CD8-positive, alpha-beta memory T cell (primary cell): ENCODE measurements at regions of chr17 and their contacts with region 1.

Region 1: GRCh38 chr17:30336369-30337171 is 2.7 kb upstream of the TMIGD1 start:
- DNase-seq: peak; percentile 45 to 74 (median 67)
- H3K4me3 ChIP-seq: no peak overlapping the region
- H3K4me3 Mint-ChIP-seq: peak overlapping the region in 1 of 7 donors; percentile 31
- H3K27ac ChIP-seq: no peak overlapping the region
- H3K27ac Mint-ChIP-seq: peak overlapping the region in 5 of 8 donors; percentile 11 to 79 (median 61)
- H3K4me1 ChIP-seq: peaks cover 12% of the 10 kb centered on the region
- H3K4me1 Mint-ChIP-seq: peaks cover 32 to 46% (median 42%) of the 10 kb centered on the region in 3 donors
- H3K27me3 ChIP-seq: no peaks in the 10 kb centered on the region
- H3K27me3 Mint-ChIP-seq: no peaks in the 10 kb centered on the region

Region 2: GRCh38 chr17:30104575-30105339 is 231.8 kb before region 1 on chr17:
- CTCF ChIA-PET with region 1: interaction called, 71 read pairs
- POLR2A ChIA-PET with region 1: no interaction called
- DNase-seq: peak; percentile 51 to 76 (median 55)
- H3K4me3 ChIP-seq: peak overlapping the region; percentile 66
- H3K4me3 Mint-ChIP-seq: peak overlapping the region; percentile 60 to 91 (median 87)
- H3K27ac ChIP-seq: no peak overlapping the region
- H3K27ac Mint-ChIP-seq: peak overlapping the region in 6 of 8 donors; percentile 5 to 88 (median 60)
- H3K4me1 ChIP-seq: peaks cover 10% of the 10 kb centered on the region
- H3K4me1 Mint-ChIP-seq: peaks cover 6 to 10% (median 6%) of the 10 kb centered on the region in 3 donors
- H3K27me3 ChIP-seq: no peaks in the 10 kb centered on the region
- H3K27me3 Mint-ChIP-seq: peaks cover 2 to 5% of the 10 kb centered on the region in 2 donors

Region 3: DNA sequence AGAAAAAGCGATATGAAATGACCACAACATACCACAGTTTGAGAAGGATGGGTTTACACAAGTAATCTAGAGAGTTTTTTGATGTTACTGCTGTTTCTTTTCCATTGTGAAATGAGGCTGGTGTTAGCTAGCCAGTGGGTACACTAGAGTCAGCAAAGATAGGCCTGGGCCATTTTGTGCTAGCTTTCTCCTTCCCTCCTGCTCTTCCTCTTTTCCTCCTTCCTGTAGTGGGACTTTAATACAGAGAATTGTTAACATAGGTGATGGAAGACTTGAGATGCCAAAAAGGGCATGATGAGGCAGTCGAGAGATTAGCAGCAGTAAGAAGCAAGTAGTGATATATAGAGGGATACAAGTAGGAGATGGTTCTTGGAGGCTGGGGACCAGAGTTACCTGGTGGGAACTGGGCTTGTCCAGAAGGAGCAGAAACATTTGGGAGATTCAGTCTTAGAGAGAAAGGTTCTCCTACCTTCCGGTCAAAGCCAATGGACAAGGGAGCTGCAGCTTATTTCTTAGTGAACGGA is 212.2 kb before region 1 on chr17:
- CTCF ChIA-PET with region 1: interaction called, 31 read pairs
- POLR2A ChIA-PET with region 1: interaction called, 5 read pairs
- DNase-seq: no peak
- H3K4me3 ChIP-seq: no peak overlapping the region
- H3K4me3 Mint-ChIP-seq: no peak overlapping the region
- H3K27ac ChIP-seq: no peak overlapping the region
- H3K27ac Mint-ChIP-seq: peak overlapping the region in 5 of 8 donors; percentile 0 to 86 (median 32)
- H3K4me1 ChIP-seq: peaks cover 7% of the 10 kb centered on the region
- H3K4me1 Mint-ChIP-seq: peaks cover 37 to 59% (median 56%) of the 10 kb centered on the region in 3 donors
- H3K27me3 ChIP-seq: no peaks in the 10 kb centered on the region
- H3K27me3 Mint-ChIP-seq: peaks cover 0 to 1% of the 10 kb centered on the region in 2 donors

Region 4: DNA sequence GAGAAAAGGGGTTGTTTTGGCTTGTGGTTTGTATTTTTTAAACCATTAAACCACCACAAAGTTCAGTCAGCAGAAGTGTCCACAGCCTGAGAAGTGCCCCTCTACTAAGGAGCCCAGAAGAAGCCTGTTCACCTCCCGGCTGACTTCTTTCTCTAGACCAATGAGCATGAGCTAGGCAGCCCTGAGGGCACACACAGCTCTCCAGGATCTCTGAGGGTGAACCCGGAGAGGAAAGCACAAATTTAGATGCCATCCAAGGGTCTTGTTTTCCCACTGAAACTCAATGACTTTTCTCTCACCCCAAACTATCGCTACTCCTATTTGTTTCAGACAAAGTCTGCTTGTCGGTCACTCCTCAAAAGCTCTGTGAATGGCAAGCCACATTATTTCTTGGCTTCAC is 78.1 kb before region 1 on chr17:
- CTCF ChIA-PET with region 1: no interaction called
- POLR2A ChIA-PET with region 1: no interaction called
- DNase-seq: no peak
- H3K4me3 ChIP-seq: no peak overlapping the region
- H3K4me3 Mint-ChIP-seq: no peak overlapping the region
- H3K27ac ChIP-seq: no peak overlapping the region
- H3K27ac Mint-ChIP-seq: peak overlapping the region in 5 of 8 donors; percentile 6 to 38 (median 27)
- H3K4me1 ChIP-seq: no peaks in the 10 kb centered on the region
- H3K4me1 Mint-ChIP-seq: peaks cover 6 to 24% (median 7%) of the 10 kb centered on the region in 3 donors
- H3K27me3 ChIP-seq: no peaks in the 10 kb centered on the region
- H3K27me3 Mint-ChIP-seq: no peaks in the 10 kb centered on the region

Region 5: DNA sequence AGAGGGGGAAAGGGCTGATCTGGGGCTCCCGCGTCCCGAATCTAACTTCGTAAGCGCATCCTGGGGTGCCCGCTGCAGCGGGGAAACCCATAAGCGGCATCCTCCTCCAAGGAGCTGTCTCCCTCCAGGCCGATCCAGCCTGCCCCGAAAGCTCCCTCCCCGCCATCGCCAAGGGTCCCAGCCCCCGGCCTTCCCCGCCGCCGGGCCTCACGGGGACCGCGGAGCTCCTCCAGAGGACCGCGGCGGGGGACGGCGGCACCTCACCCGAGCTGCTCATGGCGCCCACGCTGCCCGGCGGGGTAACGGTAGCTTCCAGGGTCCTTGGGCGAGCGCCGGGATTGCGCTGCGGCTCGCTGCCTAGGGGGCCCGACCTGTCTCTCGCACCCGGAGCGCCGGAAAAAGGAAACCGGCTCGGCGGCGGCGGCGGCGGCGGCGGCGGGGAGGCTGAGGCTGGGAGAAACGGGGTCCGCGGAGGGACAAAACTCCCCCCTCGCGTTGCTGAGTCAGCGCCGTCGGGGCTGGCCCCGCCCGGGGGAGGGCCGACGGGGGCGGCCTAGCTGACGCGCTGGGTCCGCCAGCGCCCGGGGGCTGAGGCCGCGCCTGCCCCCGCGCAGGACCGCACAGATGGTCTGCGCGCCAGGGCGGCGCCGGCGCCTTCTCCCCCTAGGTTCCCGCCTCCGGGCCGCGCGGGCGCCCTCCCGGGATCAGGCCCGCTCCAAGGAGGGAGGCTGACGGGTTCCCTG is 44.9 kb before region 1 on chr17 and contains the start of gene BLMH:
- CTCF ChIA-PET with region 1: interaction called, 36 read pairs
- POLR2A ChIA-PET with region 1: interaction called, 5 read pairs
- DNase-seq: peak; percentile 68 to 86 (median 76)
- H3K4me3 ChIP-seq: peak within 1 kb of the TSS; percentile 96
- H3K4me3 Mint-ChIP-seq: peak within 1 kb of the TSS in 6 of 7 donors; percentile 91 to 95 (median 94)
- H3K27ac ChIP-seq: peak within 1 kb of the TSS; percentile 51
- H3K27ac Mint-ChIP-seq: peak within 1 kb of the TSS; percentile 68 to 94 (median 92)
- H3K4me1 ChIP-seq: peaks cover 19% of the 10 kb centered on the region
- H3K4me1 Mint-ChIP-seq: peaks cover 21 to 26% (median 21%) of the 10 kb centered on the region in 3 donors
- H3K27me3 ChIP-seq: no peaks in the 10 kb centered on the region
- H3K27me3 Mint-ChIP-seq: no peaks in the 10 kb centered on the region
- total RNA-seq, gene BLMH: 67.1 to 68.0 TPM

Region 6: DNA sequence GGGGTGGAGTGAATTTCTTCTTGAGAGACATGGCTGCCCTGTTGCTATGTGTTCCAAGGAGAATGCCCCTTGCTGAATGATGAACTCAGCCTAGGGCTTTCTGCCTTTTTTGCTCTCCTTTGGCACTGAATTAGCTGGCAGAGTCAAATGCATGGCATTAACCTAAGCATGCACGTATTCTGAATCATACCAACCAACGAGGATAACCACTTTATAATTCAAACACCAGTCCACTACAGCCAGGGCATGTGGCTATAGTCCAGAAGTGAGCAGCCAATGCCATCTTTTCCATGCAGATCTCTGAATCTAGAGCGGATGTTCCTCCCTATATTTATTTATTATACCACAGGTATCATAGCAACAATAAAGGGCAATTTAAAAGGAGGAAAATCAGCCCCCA is 18.4 kb before region 1 on chr17:
- CTCF ChIA-PET with region 1: interaction called, 36 read pairs
- POLR2A ChIA-PET with region 1: interaction called, 4 read pairs
- DNase-seq: no peak
- H3K4me3 ChIP-seq: no peak overlapping the region
- H3K4me3 Mint-ChIP-seq: no peak overlapping the region
- H3K27ac ChIP-seq: no peak overlapping the region
- H3K27ac Mint-ChIP-seq: no peak overlapping the region
- H3K4me1 ChIP-seq: peaks cover 6% of the 10 kb centered on the region
- H3K4me1 Mint-ChIP-seq: peaks cover 6 to 37% (median 18%) of the 10 kb centered on the region in 3 donors
- H3K27me3 ChIP-seq: no peaks in the 10 kb centered on the region
- H3K27me3 Mint-ChIP-seq: no peaks in the 10 kb centered on the region

Region 7: GRCh38 chr17:30323895-30324319 is 12.7 kb before region 1 on chr17:
- CTCF ChIA-PET with region 1: interaction called, 36 read pairs
- POLR2A ChIA-PET with region 1: interaction called, 4 read pairs
- DNase-seq: peak in 3 of 5 donors; percentile 7 to 55 (median 19)
- H3K4me3 ChIP-seq: peak overlapping the region; percentile 5
- H3K4me3 Mint-ChIP-seq: peak overlapping the region; percentile 48 to 80 (median 67)
- H3K27ac ChIP-seq: peak overlapping the region; percentile 15
- H3K27ac Mint-ChIP-seq: peak overlapping the region; percentile 44 to 93 (median 92)
- H3K4me1 ChIP-seq: peaks cover 25% of the 10 kb centered on the region
- H3K4me1 Mint-ChIP-seq: peaks cover 29 to 57% (median 56%) of the 10 kb centered on the region in 3 donors
- H3K27me3 ChIP-seq: no peaks in the 10 kb centered on the region
- H3K27me3 Mint-ChIP-seq: no peaks in the 10 kb centered on the region

Region 8: GRCh38 chr17:30378824-30379302 is 42.3 kb after region 1 on chr17 and contains the start of gene CPD:
- CTCF ChIA-PET with region 1: interaction called, 15 read pairs
- POLR2A ChIA-PET with region 1: no interaction called
- DNase-seq: peak; percentile 94 to 97 (median 96)
- H3K4me3 ChIP-seq: peak within 1 kb of the TSS; percentile 94
- H3K4me3 Mint-ChIP-seq: peak within 1 kb of the TSS; percentile 88 to 98 (median 94)
- H3K27ac ChIP-seq: peak within 1 kb of the TSS; percentile 90
- H3K27ac Mint-ChIP-seq: peak within 1 kb of the TSS; percentile 86 to 99 (median 96)
- H3K4me1 ChIP-seq: peaks cover 39% of the 10 kb centered on the region
- H3K4me1 Mint-ChIP-seq: peaks cover 54 to 67% (median 61%) of the 10 kb centered on the region in 3 donors
- H3K27me3 ChIP-seq: no peaks in the 10 kb centered on the region
- H3K27me3 Mint-ChIP-seq: peaks cover 4% of the 10 kb centered on the region in 2 donors
- total RNA-seq, gene CPD: 22.8 to 26.7 TPM